ENCODE measurements at regions of chr6 and their contacts with region 1.

Region 1: GRCh38 chr6:2791124-2791974 is 26.2 kb downstream of the WRNIP1 start:
- DNase-seq: peak; percentile 75
- ATAC-seq: peak; percentile 89
- H3K4me3 ChIP-seq: no peak overlapping the region
- H3K27ac ChIP-seq: peak overlapping the region; percentile 14; the same call in 1 of the 2 replicates
- H3K4me1 ChIP-seq: peaks cover 13 to 61% of the 10 kb centered on the region in 2 experiments; a peak in 3 of 4 replicates
- H3K27me3 ChIP-seq: no peaks in the 10 kb centered on the region
- CTCF ChIP-seq: peak; percentile 82 to 91 (median 86)
- POLR2A ChIP-seq: no peak
- RAD21 ChIP-seq: peak; percentile 99

Region 2: DNA sequence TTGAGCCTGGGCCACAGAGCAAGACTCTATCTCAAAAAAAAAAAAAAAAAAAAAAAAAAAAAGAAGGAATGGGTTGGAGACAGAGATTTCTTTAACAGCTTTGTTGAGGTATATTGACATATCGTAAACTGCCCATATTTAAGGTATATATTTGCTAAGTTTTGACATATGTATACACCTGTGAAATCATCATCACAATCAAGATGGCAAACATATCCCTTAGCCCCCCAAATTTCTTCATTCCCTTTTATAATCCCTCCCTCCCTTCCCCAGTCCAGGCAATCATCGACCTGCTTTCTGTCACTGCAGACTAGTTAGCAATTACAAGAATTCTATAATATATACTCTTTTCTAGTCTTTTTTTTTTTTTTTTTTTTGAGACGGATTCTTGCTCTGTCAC is 21.3 kb after region 1 on chr6:
- CTCF ChIA-PET with region 1: no interaction called
- POLR2A ChIA-PET with region 1: no interaction called
- RAD21 ChIA-PET with region 1: no interaction called
- intact Hi-C with region 1: no loop called
- DNase-seq: no peak
- ATAC-seq: no peak
- H3K4me3 ChIP-seq: no peak overlapping the region
- H3K27ac ChIP-seq: no peak overlapping the region
- H3K4me1 ChIP-seq: peaks cover 14 to 32% of the 10 kb centered on the region in 2 experiments
- H3K27me3 ChIP-seq: no peaks in the 10 kb centered on the region
- CTCF ChIP-seq: no peak
- POLR2A ChIP-seq: no peak
- RAD21 ChIP-seq: no peak

Region 3: GRCh38 chr6:2848851-2849250 is 57.5 kb after region 1 on chr6:
- CTCF ChIA-PET with region 1: interaction called, 38 read pairs
- POLR2A ChIA-PET with region 1: interaction called, 4 read pairs
- RAD21 ChIA-PET with region 1: interaction called, 6 to 9 read pairs
- intact Hi-C with region 1: loop called (anchors 1 kb)
- DNase-seq: no peak
- ATAC-seq: peak; percentile 43
- H3K4me3 ChIP-seq: no peak overlapping the region
- H3K27ac ChIP-seq: no peak overlapping the region; the same call in 1 of the 2 replicates
- H3K4me1 ChIP-seq: peaks cover 26 to 76% of the 10 kb centered on the region in 2 experiments
- H3K27me3 ChIP-seq: no peaks in the 10 kb centered on the region
- CTCF ChIP-seq: no peak
- POLR2A ChIP-seq: no peak
- RAD21 ChIP-seq: no peak

Region 4: GRCh38 chr6:2876210-2877056 is 85.1 kb after region 1 on chr6:
- CTCF ChIA-PET with region 1: interaction called, 11 read pairs
- POLR2A ChIA-PET with region 1: no interaction called
- RAD21 ChIA-PET with region 1: interaction called in 1 of 2 experiments, 5 read pairs
- intact Hi-C with region 1: no loop called
- DNase-seq: peak; percentile 58
- ATAC-seq: peak; percentile 66
- H3K4me3 ChIP-seq: peak overlapping the region; percentile 43 to 47
- H3K27ac ChIP-seq: peak overlapping the region; percentile 76
- H3K4me1 ChIP-seq: peaks cover 29 to 39% of the 10 kb centered on the region in 2 experiments
- H3K27me3 ChIP-seq: no peaks in the 10 kb centered on the region
- CTCF ChIP-seq: no peak
- POLR2A ChIP-seq: no peak
- RAD21 ChIP-seq: no peak

Region 5: DNA sequence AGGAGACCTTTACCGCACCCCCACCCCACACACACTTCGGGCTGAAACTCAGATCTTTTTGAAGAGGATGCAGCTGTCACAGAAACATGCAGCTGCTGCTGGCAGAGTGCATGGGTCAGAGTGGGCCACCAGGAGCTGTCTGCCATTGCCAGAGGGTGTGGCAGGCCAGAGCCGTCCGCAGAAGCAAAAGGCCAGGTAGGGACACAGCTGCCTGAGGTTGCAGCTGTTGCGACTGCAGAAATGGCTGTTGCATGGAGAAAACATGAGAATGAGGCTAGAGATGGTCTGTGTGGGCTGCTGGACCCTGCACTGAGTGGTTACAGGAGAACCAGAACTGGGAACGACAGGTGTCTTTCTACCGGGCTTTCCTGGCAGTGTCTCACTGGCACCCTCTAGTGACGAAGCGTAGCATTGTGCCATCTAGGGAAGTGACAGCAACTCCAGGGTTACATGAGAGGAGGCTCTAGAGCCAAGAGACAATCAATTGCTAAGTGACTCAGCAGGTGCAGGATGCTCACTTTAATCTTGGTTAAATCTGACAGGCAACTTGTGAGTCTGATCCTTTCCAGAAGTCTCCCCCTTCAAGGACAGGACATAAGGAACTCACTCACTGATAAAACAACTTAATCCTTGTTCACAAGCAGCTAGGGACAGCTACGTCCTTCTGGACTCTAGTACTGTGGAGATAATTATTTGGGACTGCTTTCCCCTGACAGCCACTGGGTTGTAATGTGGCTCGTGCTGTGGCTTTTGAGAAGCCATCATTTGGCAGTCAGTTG is 140.8 kb after region 1 on chr6:
- CTCF ChIA-PET with region 1: interaction called, 50 read pairs
- POLR2A ChIA-PET with region 1: interaction called, 5 read pairs
- RAD21 ChIA-PET with region 1: interaction called, 5 to 9 read pairs
- intact Hi-C with region 1: loop called (anchors 1 kb)
- DNase-seq: peak; percentile 82
- ATAC-seq: peak; percentile 99
- H3K4me3 ChIP-seq: peak overlapping the region; percentile 19 to 38; a peak in 1 of 4 replicates
- H3K27ac ChIP-seq: no peak overlapping the region
- H3K4me1 ChIP-seq: peaks cover 0 to 10% of the 10 kb centered on the region in 2 experiments; a peak in 1 of 4 replicates
- H3K27me3 ChIP-seq: no peaks in the 10 kb centered on the region
- CTCF ChIP-seq: peak; percentile 92 to 99 (median 95)
- POLR2A ChIP-seq: no peak
- RAD21 ChIP-seq: peak; percentile 96

Region 6: GRCh38 chr6:2988426-2989331 is 197.3 kb after region 1 on chr6:
- CTCF ChIA-PET with region 1: interaction called, 16 read pairs
- POLR2A ChIA-PET with region 1: interaction called, 6 read pairs
- RAD21 ChIA-PET with region 1: no interaction called
- intact Hi-C with region 1: loop called (anchors 1 kb)
- DNase-seq: peak; percentile 95
- ATAC-seq: peak; percentile 82
- H3K4me3 ChIP-seq: peak overlapping the region; percentile 57 to 62
- H3K27ac ChIP-seq: peak overlapping the region; percentile 92
- H3K4me1 ChIP-seq: peaks cover 34 to 54% of the 10 kb centered on the region in 2 experiments
- H3K27me3 ChIP-seq: no peaks in the 10 kb centered on the region
- CTCF ChIP-seq: peak in 2 of 3 experiments; percentile 64 to 81; a peak in 4 of 6 replicates
- POLR2A ChIP-seq: peak; percentile 62
- RAD21 ChIP-seq: no peak

Region 7: GRCh38 chr6:3312604-3313231 is 521.4 kb after region 1 on chr6:
- CTCF ChIA-PET with region 1: no interaction called
- POLR2A ChIA-PET with region 1: no interaction called
- RAD21 ChIA-PET with region 1: no interaction called
- intact Hi-C with region 1: no loop called
- DNase-seq: no peak
- ATAC-seq: no peak
- H3K4me3 ChIP-seq: no peak overlapping the region
- H3K27ac ChIP-seq: no peak overlapping the region
- H3K4me1 ChIP-seq: no peaks in the 10 kb centered on the region
- H3K27me3 ChIP-seq: no peaks in the 10 kb centered on the region
- CTCF ChIP-seq: no peak
- POLR2A ChIP-seq: no peak
- RAD21 ChIP-seq: no peak

Measured in HCT116 (cell line).